Tibial artery (tissue), 4 donors: ENCODE measurements at regions of chr11 and their contacts with region 1.

Region 1: DNA sequence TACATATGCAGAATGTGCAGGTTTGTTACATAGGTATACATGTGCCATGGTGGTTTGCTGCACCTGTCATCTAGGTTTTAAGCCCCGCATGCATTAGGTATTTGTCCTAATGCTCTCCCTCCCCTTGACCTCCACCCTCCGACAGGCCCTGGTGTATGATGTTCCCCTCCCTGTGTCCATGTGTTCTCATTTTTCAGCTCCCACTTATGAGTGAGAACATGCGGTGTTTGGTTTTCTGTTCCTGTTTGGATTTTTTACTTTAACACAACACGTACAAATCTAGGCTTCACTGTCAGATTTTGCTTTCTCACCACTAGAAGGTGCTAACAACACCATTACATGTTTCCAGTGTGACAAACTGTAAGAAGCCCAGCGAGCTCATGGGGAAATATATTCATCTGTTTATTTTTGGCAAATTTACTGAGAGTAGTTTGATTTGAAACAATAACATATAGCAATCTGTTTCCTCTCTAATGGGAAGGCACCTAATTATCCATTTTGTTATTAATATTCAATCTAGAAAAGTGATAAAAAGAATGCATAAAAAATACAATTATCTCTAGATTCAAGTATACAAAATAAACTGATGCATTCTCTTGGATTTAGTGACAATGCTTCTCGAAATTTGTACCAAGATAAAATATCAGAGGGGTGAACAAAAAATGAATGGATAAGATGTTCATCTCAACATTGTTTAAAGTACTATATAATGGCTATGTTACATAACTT is 23.2 kb upstream of the BIRC3 start:
- DNase-seq: no peak
- H3K4me3 ChIP-seq: no peak overlapping the region
- H3K27ac ChIP-seq: no peak overlapping the region
- H3K4me1 ChIP-seq: peaks cover 0 to 23% (median 7%) of the 10 kb centered on the region in 4 donors
- H3K27me3 ChIP-seq: no peaks in the 10 kb centered on the region
- CTCF ChIP-seq: peak; percentile 58 to 61

Region 2: DNA sequence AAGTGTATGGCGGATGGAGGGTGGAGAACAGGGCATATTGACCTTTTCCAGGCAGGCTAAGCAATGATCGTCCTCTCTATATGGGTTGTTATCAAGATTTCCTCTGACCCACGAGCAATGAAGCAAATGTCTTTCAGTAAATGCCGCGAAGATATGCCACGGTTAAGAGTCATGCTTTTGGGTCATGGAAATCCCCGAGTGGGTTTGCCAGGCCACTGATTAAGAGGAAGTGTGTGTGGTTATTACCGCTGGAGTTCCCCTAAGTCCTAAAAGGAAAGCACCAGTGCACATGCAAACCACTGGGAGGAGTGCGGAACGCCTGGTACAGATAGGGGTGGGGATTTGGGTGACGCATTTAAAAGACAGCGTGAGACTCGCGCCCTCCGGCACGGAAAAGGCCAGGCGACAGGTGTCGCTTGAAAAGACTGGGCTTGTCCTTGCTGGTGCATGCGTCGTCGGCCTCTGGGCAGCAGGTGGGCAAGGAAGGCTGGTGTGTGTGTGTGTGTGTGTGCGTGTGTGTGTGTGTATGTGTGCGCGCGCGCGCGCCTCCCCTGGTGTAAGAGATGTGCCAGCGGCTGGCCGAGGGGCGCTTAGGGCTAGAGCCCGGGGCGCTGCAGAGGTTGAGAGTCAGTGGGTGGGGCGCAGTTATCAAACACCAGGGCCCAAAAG is 23.2 kb after region 1 on chr11 and contains the start of gene BIRC3:
- intact Hi-C with region 1: no loop called
- DNase-seq: peak; percentile 86 to 90
- H3K4me3 ChIP-seq: peak within 1 kb of the TSS; percentile 61 to 62
- H3K27ac ChIP-seq: peak within 1 kb of the TSS; percentile 63 to 68
- H3K4me1 ChIP-seq: peaks cover 0 to 37% (median 12%) of the 10 kb centered on the region in 4 donors
- H3K27me3 ChIP-seq: no peaks in the 10 kb centered on the region
- CTCF ChIP-seq: peak; percentile 37 to 53

Region 3: GRCh38 chr11:102341844-102342318 is 47.8 kb after region 1 on chr11:
- intact Hi-C with region 1: loop called (anchors 5 kb)
- DNase-seq: peak; percentile 79 to 83
- H3K4me3 ChIP-seq: no peak overlapping the region
- H3K27ac ChIP-seq: no peak overlapping the region
- H3K4me1 ChIP-seq: peaks cover 0 to 8% (median 4%) of the 10 kb centered on the region in 4 donors
- H3K27me3 ChIP-seq: no peaks in the 10 kb centered on the region
- CTCF ChIP-seq: peak; percentile 69